Ovary (tissue), 10 donors: ENCODE measurements at regions of chr11 and their contacts with region 1.

Region 1: DNA sequence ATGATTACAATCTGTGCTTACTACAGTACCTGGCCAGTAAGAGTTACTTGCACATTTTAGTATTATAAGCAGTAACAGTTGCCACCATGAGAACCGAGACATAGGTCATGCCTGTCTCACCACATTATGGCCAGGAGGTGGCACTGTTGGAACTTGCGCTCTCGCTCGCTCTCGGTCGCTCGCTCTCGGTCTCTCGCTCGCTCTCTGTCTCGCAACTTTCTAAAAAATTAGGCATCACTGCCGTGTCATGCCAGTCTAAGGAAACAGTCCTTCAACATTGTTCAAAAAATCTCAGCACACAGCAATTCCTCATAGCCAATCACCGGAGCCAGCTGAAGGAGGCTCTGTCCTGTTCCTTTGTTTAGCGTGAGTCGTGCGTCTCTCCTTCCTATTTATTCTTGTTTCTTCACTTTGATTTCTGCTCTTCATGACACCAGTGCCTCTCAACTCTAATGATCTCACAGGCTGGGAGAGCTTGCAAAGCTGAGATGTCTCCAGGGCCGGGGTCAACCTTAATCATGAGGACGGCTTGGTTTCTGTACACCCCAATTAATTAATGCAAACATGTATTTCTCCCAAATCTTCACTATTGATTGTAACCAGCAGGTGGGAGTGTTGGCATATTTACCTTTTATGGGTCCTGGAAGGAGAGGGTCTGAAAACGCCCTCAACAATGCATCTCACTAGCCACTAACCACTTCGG is 6.3 kb upstream of the ADAMTS8 start:
- DNase-seq: peak; percentile 68 to 79 (median 76)
- H3K4me3 ChIP-seq: peak overlapping the region; percentile 38
- H3K27ac ChIP-seq: peak overlapping the region; percentile 18 to 39
- H3K4me1 ChIP-seq: peaks cover 2% of the 10 kb centered on the region
- H3K27me3 ChIP-seq: no peaks in the 10 kb centered on the region
- CTCF ChIP-seq: peak; percentile 74 to 85 (median 75)
- EP300 ChIP-seq: no peak
- POLR2A ChIP-seq: no peak

Region 2: DNA sequence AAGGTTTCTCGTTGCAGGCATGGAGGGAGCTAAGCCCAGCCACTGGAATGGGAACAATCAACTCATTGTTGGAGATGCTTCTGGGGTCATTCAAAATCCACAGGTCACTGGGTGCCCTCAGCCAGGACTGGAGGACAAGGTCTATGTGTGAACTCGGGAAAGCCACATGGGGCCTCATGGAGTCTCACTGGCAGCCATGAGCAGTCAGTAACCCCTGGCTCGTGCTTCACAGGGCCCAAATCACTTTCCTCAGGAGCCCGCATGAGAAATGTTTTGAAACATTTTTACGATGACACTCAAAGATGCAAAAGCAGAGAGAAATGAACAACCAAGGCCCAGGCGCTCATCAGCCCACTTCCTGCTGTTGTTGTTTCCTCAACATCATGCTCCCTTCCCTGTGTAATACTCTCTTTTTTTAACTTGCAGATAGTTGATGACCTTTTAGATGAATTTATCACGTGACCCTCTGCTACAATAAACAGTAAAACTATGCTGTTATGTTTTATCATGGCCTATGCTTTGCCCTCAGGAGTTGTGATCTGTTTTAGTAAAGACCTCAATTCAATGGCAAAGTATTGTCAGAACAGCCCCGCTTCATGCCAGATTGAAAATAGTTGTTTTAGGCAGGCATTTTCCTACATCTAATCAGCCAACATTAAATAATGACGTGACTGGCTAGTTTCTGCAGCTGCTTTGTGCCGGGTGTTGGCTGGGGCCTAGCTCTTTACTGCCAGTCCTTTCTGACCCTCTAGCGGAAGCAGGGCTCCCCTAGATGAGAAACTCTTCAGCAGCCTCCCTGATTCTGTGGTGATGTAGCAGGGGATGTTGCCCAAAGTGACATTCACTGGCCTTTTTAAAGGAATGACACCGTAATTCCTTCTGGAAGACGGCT is 53.5 kb after region 1 on chr11:
- intact Hi-C with region 1: no loop called
- DNase-seq: no peak
- H3K4me3 ChIP-seq: no peak overlapping the region
- H3K27ac ChIP-seq: no peak overlapping the region
- H3K4me1 ChIP-seq: peaks cover 3% of the 10 kb centered on the region
- H3K27me3 ChIP-seq: no peaks in the 10 kb centered on the region
- CTCF ChIP-seq: no peak
- EP300 ChIP-seq: no peak
- POLR2A ChIP-seq: no peak

Region 3: GRCh38 chr11:130861902-130862860 is 427.5 kb after region 1 on chr11:
- intact Hi-C with region 1: loop called (anchors 1 to 5 kb)
- DNase-seq: peak; percentile 88 to 95 (median 93)
- H3K4me3 ChIP-seq: no peak overlapping the region
- H3K27ac ChIP-seq: no peak overlapping the region
- H3K4me1 ChIP-seq: no peaks in the 10 kb centered on the region
- H3K27me3 ChIP-seq: no peaks in the 10 kb centered on the region
- CTCF ChIP-seq: peak; percentile 99 to 100 (median 100)
- EP300 ChIP-seq: no peak
- POLR2A ChIP-seq: peak; percentile 46

Region 4: DNA sequence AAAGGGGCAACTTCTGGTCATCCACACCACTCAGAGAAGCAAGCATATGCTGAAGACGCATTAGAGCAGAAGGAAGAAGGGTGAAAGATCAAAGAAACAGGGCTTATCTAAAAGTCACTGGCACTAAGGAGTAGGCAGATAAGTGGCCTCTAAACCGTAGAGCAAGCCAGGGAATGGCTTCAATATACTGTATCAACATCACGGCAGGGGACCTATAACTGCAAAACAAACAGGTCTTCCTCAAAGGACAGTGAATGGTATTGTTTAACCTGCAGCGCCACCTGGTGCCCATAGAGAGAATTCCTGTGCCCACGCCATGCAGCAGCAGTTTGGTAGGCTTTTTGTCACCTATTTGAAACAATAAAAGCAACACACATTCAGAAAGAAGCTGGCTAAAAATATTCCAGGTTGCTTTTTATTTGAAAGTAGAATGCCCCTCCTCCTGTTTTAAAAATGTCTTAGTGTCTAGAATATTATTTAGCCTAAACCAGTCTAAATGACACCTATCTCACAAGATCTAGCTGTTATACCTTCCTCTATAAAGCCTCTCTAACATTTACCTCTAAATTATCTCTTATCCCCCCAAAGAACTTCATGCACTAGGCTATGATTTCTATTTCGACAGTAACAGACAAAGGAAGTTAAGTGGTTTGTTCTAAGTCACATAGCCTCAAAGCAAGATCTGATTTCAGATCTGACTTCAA is 459.8 kb after region 1 on chr11:
- intact Hi-C with region 1: loop called in 2 of 4 experiments (anchors 10 kb)
- DNase-seq: peak; percentile 50 to 82 (median 73)
- H3K4me3 ChIP-seq: no peak overlapping the region
- H3K27ac ChIP-seq: peak overlapping the region in 1 of 2 donors; percentile 30
- H3K4me1 ChIP-seq: peaks cover 10% of the 10 kb centered on the region
- H3K27me3 ChIP-seq: no peaks in the 10 kb centered on the region
- CTCF ChIP-seq: peak; percentile 56 to 83 (median 63)
- EP300 ChIP-seq: no peak
- POLR2A ChIP-seq: no peak